Sigmoid colon (tissue), 7 donors: ENCODE measurements at regions of chr18 and their contacts with region 1.

Region 1: DNA sequence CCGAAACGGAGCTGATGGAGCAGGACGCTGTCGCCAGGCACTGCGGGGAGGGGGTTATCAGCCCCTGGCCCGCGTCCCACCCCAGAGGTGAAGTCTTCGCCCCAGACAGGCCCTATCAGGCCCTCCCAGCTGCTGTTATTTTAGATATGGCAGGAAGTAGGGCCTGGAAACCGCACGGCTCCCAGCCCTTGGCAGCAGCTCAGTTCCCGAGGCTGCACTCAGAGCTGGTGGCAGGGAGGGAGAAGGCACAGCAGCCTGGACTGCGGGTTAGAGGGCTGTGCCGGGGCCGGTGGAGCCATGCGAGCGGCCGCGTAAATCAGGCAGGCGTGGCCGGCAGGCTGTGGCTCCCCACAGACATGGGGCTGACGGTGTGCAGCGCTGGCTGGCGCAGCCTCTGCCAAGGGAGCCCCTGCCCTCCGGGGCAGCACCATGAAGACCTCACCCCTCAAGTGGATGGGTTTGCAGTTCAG is 111.4 kb downstream of the NFATC1 start:
- DNase-seq: peak; percentile 88
- H3K4me3 ChIP-seq: peak overlapping the region; percentile 11 to 44 (median 41)
- H3K27ac ChIP-seq: peak overlapping the region; percentile 88 to 93 (median 90)
- H3K4me1 ChIP-seq: peaks cover 0 to 43% (median 32%) of the 10 kb centered on the region in 4 donors
- H3K27me3 ChIP-seq: no peaks in the 10 kb centered on the region
- CTCF ChIP-seq: no peak
- EP300 ChIP-seq: no peak
- POLR2A ChIP-seq: no peak

Region 2: DNA sequence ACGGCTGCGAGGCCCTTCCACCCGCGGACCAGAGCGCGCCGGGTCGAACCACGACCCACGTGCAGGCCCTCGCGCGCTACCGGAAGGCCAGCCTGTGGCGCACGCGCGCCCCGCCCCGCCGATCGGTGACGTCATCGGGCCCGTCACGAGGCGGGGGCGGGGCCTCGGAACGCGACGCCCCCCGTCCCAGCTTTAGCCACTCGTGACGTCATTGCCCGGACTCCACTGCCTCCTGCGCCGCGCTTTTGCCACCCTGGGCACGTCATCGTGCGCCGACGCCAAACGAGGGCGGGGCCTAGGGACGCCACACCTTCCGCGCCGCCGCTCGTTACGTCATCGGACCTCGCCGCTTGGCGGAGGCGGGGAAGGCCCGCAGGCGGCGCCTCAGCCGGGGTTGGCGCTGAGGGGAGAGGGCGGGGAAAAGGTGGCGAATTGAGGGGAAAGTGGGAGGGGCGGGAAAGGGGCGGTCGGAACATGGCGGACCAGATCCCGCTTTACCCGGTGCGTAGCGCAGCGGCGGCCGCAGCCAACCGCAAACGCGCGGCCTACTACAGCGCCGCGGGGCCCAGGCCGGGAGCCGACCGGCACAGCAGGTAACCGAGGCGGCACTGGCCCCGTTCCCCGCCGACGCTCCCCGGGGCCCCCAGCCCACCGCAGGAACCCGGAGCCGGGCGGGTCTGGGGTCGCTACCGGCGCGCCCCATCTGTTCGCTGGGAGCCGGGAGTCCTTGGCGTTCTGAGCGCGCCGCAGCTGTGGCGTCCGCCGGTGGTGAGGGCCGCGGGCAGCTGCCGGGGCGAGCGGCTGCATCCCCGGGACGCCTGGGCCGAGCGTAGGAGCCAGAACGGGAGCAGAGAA is 437.9 kb before region 1 on chr18 and contains the start of gene ATP9B:
- intact Hi-C with region 1: loop called (anchors 10 kb)
- DNase-seq: peak; percentile 99
- H3K4me3 ChIP-seq: peak within 1 kb of the TSS; percentile 91 to 100 (median 98)
- H3K27ac ChIP-seq: peak within 1 kb of the TSS; percentile 95 to 97 (median 96)
- H3K4me1 ChIP-seq: peaks cover 0 to 20% (median 13%) of the 10 kb centered on the region in 4 donors
- H3K27me3 ChIP-seq: no peaks in the 10 kb centered on the region
- CTCF ChIP-seq: no peak
- EP300 ChIP-seq: peak in 2 of 4 donors; percentile 3 to 89
- POLR2A ChIP-seq: no peak
- total RNA-seq, gene ATP9B: 28.1 to 66.5 (median 36.0) TPM

Region 3: GRCh38 chr18:79393635-79394533 is 113.2 kb before region 1 on chr18:
- intact Hi-C with region 1: loop called (anchors 5 kb)
- DNase-seq: peak; percentile 97
- H3K4me3 ChIP-seq: peak overlapping the region; percentile 40 to 82 (median 64)
- H3K27ac ChIP-seq: peak overlapping the region; percentile 95 to 98 (median 96)
- H3K4me1 ChIP-seq: peaks cover 0 to 38% (median 32%) of the 10 kb centered on the region in 4 donors
- H3K27me3 ChIP-seq: no peaks in the 10 kb centered on the region
- CTCF ChIP-seq: no peak
- EP300 ChIP-seq: peak in 1 of 4 donors; percentile 59
- POLR2A ChIP-seq: no peak

Region 4: GRCh38 chr18:79496978-79497637 is 10.0 kb before region 1 on chr18:
- intact Hi-C with region 1: loop called (anchors 1 kb)
- DNase-seq: peak; percentile 90
- H3K4me3 ChIP-seq: peak overlapping the region in 3 of 4 donors; percentile 8 to 22 (median 13)
- H3K27ac ChIP-seq: peak overlapping the region; percentile 44 to 92 (median 84)
- H3K4me1 ChIP-seq: peaks cover 0 to 36% (median 32%) of the 10 kb centered on the region in 4 donors
- H3K27me3 ChIP-seq: no peaks in the 10 kb centered on the region
- CTCF ChIP-seq: no peak
- EP300 ChIP-seq: peak in 1 of 4 donors; percentile 38
- POLR2A ChIP-seq: no peak

Region 5: GRCh38 chr18:79560042-79560860 is 53.1 kb after region 1 on chr18:
- intact Hi-C with region 1: no loop called
- DNase-seq: peak; percentile 43
- H3K4me3 ChIP-seq: no peak overlapping the region
- H3K27ac ChIP-seq: no peak overlapping the region
- H3K4me1 ChIP-seq: no peaks in the 10 kb centered on the region
- H3K27me3 ChIP-seq: no peaks in the 10 kb centered on the region
- CTCF ChIP-seq: no peak
- EP300 ChIP-seq: no peak
- POLR2A ChIP-seq: no peak